WTC11 (cell line): ENCODE measurements at regions of chr3 and their contacts with region 1.

Region 1: DNA sequence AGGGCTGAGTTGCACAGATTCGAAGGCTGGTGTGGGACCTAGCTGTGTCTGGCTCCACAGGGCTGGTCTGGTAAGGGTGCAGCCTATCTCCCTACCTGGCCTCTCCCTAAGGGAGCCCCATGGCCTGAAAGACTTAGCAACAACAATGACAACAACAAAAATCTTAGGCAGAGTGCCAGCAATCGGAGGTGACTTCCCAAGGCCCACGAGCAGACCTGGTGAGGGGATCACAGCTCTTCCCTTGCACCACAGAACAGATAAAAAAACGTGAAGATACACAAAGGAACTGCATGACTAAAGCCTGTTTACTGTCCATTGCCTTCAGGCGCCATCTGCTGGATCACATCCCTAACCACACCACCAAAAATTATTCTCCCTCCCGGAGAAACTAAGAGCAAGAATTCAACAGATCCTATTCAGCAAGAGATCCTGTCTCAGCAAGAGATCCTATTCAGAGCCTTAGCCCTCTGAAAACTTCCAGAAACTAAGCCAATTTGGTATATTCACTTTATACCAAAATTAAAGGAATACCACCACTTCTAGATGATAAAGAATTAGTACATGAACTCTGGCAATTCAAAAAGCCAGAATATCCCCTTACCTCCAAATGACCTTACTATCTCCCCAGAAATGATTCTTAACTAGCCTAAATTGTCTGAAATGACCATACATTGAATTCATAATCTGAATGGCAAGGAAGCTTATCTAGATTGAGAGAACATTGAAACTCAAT is 24.1 kb upstream of the OR5K4 start:
- DNase-seq: peak; percentile 39
- ATAC-seq: peak; percentile 46
- H3K4me3 Mint-ChIP-seq: no peak overlapping the region
- H3K27ac Mint-ChIP-seq: 0 out of 2 replicates have a peak overlapping the region, but pooled peaks have one; percentile 12
- H3K4me1 Mint-ChIP-seq: peaks cover 60% of the 10 kb centered on the region
- H3K27me3 Mint-ChIP-seq: no peaks in the 10 kb centered on the region; the same call in 1 of the 2 replicates
- CTCF ChIP-seq: peak; percentile 40

Region 2: GRCh38 chr3:98039322-98040024 is 290.1 kb before region 1 on chr3:
- CTCF ChIA-PET with region 1: interaction called, 41 read pairs
- POLR2A ChIA-PET with region 1: no interaction called
- DNase-seq: peak; percentile 61
- ATAC-seq: peak; percentile 94
- H3K4me3 Mint-ChIP-seq: peak overlapping the region; percentile 92
- H3K27ac Mint-ChIP-seq: peak overlapping the region; percentile 88; the same call in 1 of the 2 replicates
- H3K4me1 Mint-ChIP-seq: peaks cover 7% of the 10 kb centered on the region; the same call in 1 of the 2 replicates
- H3K27me3 Mint-ChIP-seq: no peaks in the 10 kb centered on the region
- CTCF ChIP-seq: peak; percentile 91

Region 3: GRCh38 chr3:98048586-98048985 is 281.0 kb before region 1 on chr3:
- CTCF ChIA-PET with region 1: interaction called, 11 read pairs
- POLR2A ChIA-PET with region 1: no interaction called
- DNase-seq: no peak
- ATAC-seq: no peak
- H3K4me3 Mint-ChIP-seq: no peak overlapping the region
- H3K27ac Mint-ChIP-seq: no peak overlapping the region
- H3K4me1 Mint-ChIP-seq: no peaks in the 10 kb centered on the region
- H3K27me3 Mint-ChIP-seq: no peaks in the 10 kb centered on the region
- CTCF ChIP-seq: no peak

Region 4: GRCh38 chr3:98188545-98188944 is 141.0 kb before region 1 on chr3:
- CTCF ChIA-PET with region 1: interaction called, 15 read pairs
- POLR2A ChIA-PET with region 1: no interaction called
- DNase-seq: no peak
- ATAC-seq: peak; percentile 84
- H3K4me3 Mint-ChIP-seq: no peak overlapping the region
- H3K27ac Mint-ChIP-seq: no peak overlapping the region
- H3K4me1 Mint-ChIP-seq: peaks cover 40% of the 10 kb centered on the region
- H3K27me3 Mint-ChIP-seq: no peaks in the 10 kb centered on the region; the same call in 1 of the 2 replicates
- CTCF ChIP-seq: peak; percentile 26

Region 5: GRCh38 chr3:98291332-98291957 is 38.1 kb before region 1 on chr3:
- CTCF ChIA-PET with region 1: interaction called, 10 read pairs
- POLR2A ChIA-PET with region 1: no interaction called
- DNase-seq: no peak
- ATAC-seq: no peak
- H3K4me3 Mint-ChIP-seq: no peak overlapping the region
- H3K27ac Mint-ChIP-seq: no peak overlapping the region
- H3K4me1 Mint-ChIP-seq: no peaks in the 10 kb centered on the region
- H3K27me3 Mint-ChIP-seq: peaks cover 5% of the 10 kb centered on the region; the same call in 1 of the 2 replicates
- CTCF ChIP-seq: no peak

Region 6: DNA sequence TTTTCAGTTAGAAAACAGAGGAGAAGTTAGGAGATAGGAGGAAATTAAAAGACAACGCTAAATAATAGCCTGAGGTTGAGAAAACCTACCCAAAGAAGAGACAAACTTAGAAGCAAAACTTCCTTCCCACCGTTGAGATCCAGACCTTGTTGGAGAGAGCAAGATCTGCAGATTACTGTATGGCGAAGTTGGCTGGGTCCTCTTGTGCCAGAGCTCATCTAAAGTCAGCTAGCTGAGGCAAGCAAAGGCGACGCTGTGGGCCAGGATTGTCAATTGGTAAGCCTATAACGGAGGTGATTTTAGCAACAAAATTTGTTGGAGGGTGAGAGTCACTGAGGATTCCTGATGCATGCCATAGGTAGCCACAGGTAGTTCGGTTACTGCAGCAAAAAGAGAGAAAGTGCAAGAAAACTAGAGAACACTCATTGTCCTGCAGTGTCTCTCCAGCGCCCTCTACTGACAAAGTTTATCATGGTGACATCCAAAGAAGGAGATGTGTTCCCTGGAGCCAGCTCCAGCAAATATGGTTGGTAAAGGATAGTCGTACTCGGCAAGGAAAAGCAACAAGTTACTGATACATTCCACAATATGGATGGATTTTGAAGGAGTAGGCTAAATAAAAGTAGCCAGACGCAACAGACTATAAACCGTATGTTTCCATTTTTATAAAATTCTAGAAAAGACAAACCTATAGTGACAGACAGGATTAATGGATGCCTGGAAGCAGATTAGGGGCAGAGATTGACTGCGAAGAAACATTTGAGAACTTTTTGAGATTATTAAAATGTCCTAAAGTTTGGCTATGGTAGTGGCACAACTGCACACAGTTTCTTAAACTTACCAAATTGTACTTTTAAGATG is 14.3 kb after region 1 on chr3:
- CTCF ChIA-PET with region 1: interaction called, 14 read pairs
- POLR2A ChIA-PET with region 1: no interaction called
- DNase-seq: peak; percentile 54
- ATAC-seq: peak; percentile 89
- H3K4me3 Mint-ChIP-seq: no peak overlapping the region
- H3K27ac Mint-ChIP-seq: no peak overlapping the region
- H3K4me1 Mint-ChIP-seq: peaks cover 6% of the 10 kb centered on the region
- H3K27me3 Mint-ChIP-seq: no peaks in the 10 kb centered on the region
- CTCF ChIP-seq: peak; percentile 78